ENCODE measurements at regions of chr1 and their contacts with region 1.

Region 1: GRCh38 chr1:200802865-200803512 is 64.3 kb downstream of the CAMSAP2 start:
- DNase-seq: peak; percentile 59 to 70 (median 63)
- H3K4me3 ChIP-seq: no peak overlapping the region
- H3K4me3 Mint-ChIP-seq: no peak overlapping the region
- H3K27ac ChIP-seq: no peak overlapping the region
- H3K27ac Mint-ChIP-seq: no peak overlapping the region
- H3K4me1 ChIP-seq: peaks cover 4% of the 10 kb centered on the region
- H3K4me1 Mint-ChIP-seq: peaks cover 0 to 3% (median 0%) of the 10 kb centered on the region in 4 donors
- H3K27me3 ChIP-seq: no peaks in the 10 kb centered on the region
- H3K27me3 Mint-ChIP-seq: no peaks in the 10 kb centered on the region

Region 2: DNA sequence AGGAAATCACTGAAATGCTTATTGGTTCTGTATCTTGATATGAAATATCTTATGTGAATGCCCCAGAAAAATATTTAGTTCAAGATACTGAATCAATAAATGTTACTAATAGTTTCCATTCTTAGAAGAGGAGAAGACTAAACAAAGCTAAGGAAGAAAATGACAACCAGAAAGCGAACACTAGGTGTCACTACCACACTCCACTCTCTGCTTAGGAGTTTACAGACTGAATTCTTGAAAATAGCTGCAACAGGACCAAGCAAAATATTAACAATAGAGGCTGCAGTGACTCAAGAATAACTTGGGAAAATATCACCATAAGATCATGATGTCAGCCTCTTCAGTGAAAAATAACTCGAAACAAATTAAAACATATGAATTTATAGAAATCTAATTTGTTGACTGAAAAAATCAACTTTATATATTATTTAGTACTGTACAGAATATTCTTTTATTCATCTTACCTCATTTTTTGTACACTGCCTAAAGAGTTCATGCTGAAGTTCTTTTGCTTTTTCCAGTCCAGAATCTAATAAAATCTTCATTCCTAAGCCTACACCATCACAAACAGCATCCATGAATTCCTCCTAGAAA is 244.0 kb before region 1 on chr1:
- CTCF ChIA-PET with region 1: interaction called, 15 read pairs
- POLR2A ChIA-PET with region 1: no interaction called
- intact Hi-C with region 1: no loop called
- DNase-seq: peak in 4 of 5 donors; percentile 5 to 12 (median 10)
- H3K4me3 ChIP-seq: no peak overlapping the region
- H3K4me3 Mint-ChIP-seq: no peak overlapping the region
- H3K27ac ChIP-seq: no peak overlapping the region
- H3K27ac Mint-ChIP-seq: peak overlapping the region in 1 of 7 donors; percentile 65
- H3K4me1 ChIP-seq: no peaks in the 10 kb centered on the region
- H3K4me1 Mint-ChIP-seq: peaks cover 0 to 2% (median 0%) of the 10 kb centered on the region in 4 donors
- H3K27me3 ChIP-seq: no peaks in the 10 kb centered on the region
- H3K27me3 Mint-ChIP-seq: no peaks in the 10 kb centered on the region

Region 3: GRCh38 chr1:200602632-200603031 is 200.4 kb before region 1 on chr1:
- CTCF ChIA-PET with region 1: no interaction called
- POLR2A ChIA-PET with region 1: no interaction called
- intact Hi-C with region 1: no loop called
- DNase-seq: no peak
- H3K4me3 ChIP-seq: no peak overlapping the region
- H3K4me3 Mint-ChIP-seq: no peak overlapping the region
- H3K27ac ChIP-seq: no peak overlapping the region
- H3K27ac Mint-ChIP-seq: no peak overlapping the region
- H3K4me1 ChIP-seq: no peaks in the 10 kb centered on the region
- H3K4me1 Mint-ChIP-seq: no peaks in the 10 kb centered on the region
- H3K27me3 ChIP-seq: no peaks in the 10 kb centered on the region
- H3K27me3 Mint-ChIP-seq: no peaks in the 10 kb centered on the region

Region 4: GRCh38 chr1:200669314-200670241 is 133.4 kb before region 1 on chr1 and contains the start of gene DDX59:
- CTCF ChIA-PET with region 1: interaction called, 7 read pairs
- POLR2A ChIA-PET with region 1: interaction called, 3 read pairs
- intact Hi-C with region 1: loop called (anchors 2 kb)
- DNase-seq: peak; percentile 85 to 92 (median 87)
- H3K4me3 ChIP-seq: peak within 1 kb of the TSS; percentile 57 to 95
- H3K4me3 Mint-ChIP-seq: peak within 1 kb of the TSS; percentile 95 to 99 (median 98)
- H3K27ac ChIP-seq: peak within 1 kb of the TSS; percentile 98
- H3K27ac Mint-ChIP-seq: peak within 1 kb of the TSS; percentile 95 to 99 (median 98)
- H3K4me1 ChIP-seq: peaks cover 39% of the 10 kb centered on the region
- H3K4me1 Mint-ChIP-seq: peaks cover 29 to 57% (median 41%) of the 10 kb centered on the region in 4 donors
- H3K27me3 ChIP-seq: no peaks in the 10 kb centered on the region
- H3K27me3 Mint-ChIP-seq: no peaks in the 10 kb centered on the region
- total RNA-seq, gene DDX59: 37.0 to 37.5 TPM

Region 5: DNA sequence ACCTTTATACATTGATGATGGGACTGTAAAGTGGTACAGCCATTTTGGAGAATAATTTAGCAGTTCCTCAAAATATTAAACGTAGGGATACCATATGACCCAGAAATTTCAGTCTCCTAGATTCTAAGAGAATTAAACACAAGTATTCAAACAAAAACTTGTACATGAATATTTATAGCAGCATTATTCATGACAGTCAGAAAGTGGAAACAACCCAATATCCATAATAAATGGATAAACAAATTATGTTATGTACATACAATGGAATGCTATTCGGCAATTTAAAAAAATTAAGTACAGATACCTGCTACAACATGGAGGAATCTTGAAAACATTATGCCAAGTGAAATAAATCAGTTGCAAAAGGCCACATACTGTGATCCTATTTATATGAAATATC is 116.4 kb before region 1 on chr1:
- CTCF ChIA-PET with region 1: no interaction called
- POLR2A ChIA-PET with region 1: no interaction called
- intact Hi-C with region 1: loop called (anchors 5 kb)
- DNase-seq: no peak
- H3K4me3 ChIP-seq: no peak overlapping the region
- H3K4me3 Mint-ChIP-seq: no peak overlapping the region
- H3K27ac ChIP-seq: no peak overlapping the region
- H3K27ac Mint-ChIP-seq: no peak overlapping the region
- H3K4me1 ChIP-seq: no peaks in the 10 kb centered on the region
- H3K4me1 Mint-ChIP-seq: no peaks in the 10 kb centered on the region
- H3K27me3 ChIP-seq: no peaks in the 10 kb centered on the region
- H3K27me3 Mint-ChIP-seq: peaks cover 0 to 1% of the 10 kb centered on the region in 2 donors

Region 6: DNA sequence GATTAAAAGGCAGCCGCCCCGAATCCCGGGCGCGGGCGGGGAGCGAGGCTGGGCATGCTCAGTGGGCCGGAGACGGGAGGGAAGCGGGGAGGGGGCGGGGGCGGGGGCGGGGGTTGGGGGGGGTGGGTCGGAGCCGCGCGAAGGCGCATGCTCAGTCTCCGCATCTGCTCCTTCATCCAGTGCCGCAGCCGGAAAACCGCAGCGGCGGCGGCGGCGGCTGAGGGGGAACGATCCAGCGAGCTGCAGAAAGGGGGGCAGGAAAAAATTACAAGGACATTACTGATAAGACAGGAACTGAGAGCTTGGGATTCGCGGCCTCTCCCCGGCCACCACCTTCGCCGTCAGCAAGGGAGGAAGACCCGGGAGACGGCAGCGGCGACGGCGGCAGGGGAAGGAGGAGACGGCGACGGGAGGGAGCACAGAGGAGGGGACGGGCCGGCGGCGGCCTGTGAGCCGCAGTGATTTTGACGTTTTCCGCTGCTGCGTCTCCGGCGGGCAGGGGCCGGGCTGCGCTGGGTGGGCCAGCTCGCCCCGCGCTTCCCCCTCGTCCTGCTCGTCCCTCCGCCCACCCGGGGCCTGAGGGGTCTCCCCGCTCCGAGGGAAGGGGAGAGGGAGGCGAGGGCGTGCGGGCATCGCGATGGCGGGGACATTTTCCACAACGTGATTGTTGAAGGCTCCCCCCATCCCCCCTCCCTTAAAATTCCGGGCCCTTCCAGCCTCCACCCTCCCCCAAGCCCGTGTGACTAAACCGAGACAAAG is 64.1 kb before region 1 on chr1 and contains the start of gene CAMSAP2:
- CTCF ChIA-PET with region 1: interaction called, 8 read pairs
- POLR2A ChIA-PET with region 1: no interaction called
- intact Hi-C with region 1: loop called (anchors 5 kb)
- DNase-seq: peak; percentile 62 to 75 (median 68)
- H3K4me3 ChIP-seq: peak within 1 kb of the TSS; percentile 37 to 76
- H3K4me3 Mint-ChIP-seq: peak within 1 kb of the TSS; percentile 95 to 98 (median 98)
- H3K27ac ChIP-seq: peak within 1 kb of the TSS; percentile 60
- H3K27ac Mint-ChIP-seq: peak within 1 kb of the TSS; percentile 86 to 98 (median 94)
- H3K4me1 ChIP-seq: peaks cover 29% of the 10 kb centered on the region
- H3K4me1 Mint-ChIP-seq: peaks cover 23 to 41% (median 30%) of the 10 kb centered on the region in 4 donors
- H3K27me3 ChIP-seq: no peaks in the 10 kb centered on the region
- H3K27me3 Mint-ChIP-seq: no peaks in the 10 kb centered on the region
- total RNA-seq, gene CAMSAP2: 6.1 to 7.5 TPM

Measured in CD4-positive, alpha-beta memory T cell (primary cell).